ENCODE measurements at regions of chr3 and their contacts with region 1.

Region 1: GRCh38 chr3:93906245-93906644 is 67.5 kb downstream of the PROS1 start:
- DNase-seq: no peak
- ATAC-seq: no peak
- H3K4me3 ChIP-seq: no peak overlapping the region
- H3K27ac ChIP-seq: no peak overlapping the region
- H3K4me1 ChIP-seq: no peaks in the 10 kb centered on the region
- H3K27me3 ChIP-seq: no peaks in the 10 kb centered on the region
- CTCF ChIP-seq: no peak
- POLR2A ChIP-seq: no peak
- RAD21 ChIP-seq: no peak

Region 2: GRCh38 chr3:93855406-93855805 is 50.8 kb before region 1 on chr3:
- CTCF ChIA-PET with region 1: no interaction called
- POLR2A ChIA-PET with region 1: interaction called, 10 read pairs
- dilution Hi-C with region 1: no loop called
- in situ Hi-C with region 1: no loop called
- intact Hi-C with region 1: no loop called
- DNase-seq: no peak
- ATAC-seq: no peak
- H3K4me3 ChIP-seq: no peak overlapping the region
- H3K27ac ChIP-seq: no peak overlapping the region
- H3K4me1 ChIP-seq: no peaks in the 10 kb centered on the region
- H3K27me3 ChIP-seq: no peaks in the 10 kb centered on the region
- CTCF ChIP-seq: no peak
- POLR2A ChIP-seq: no peak
- RAD21 ChIP-seq: no peak

Region 3: GRCh38 chr3:93961489-93961888 is 55.2 kb after region 1 on chr3:
- CTCF ChIA-PET with region 1: no interaction called
- POLR2A ChIA-PET with region 1: no interaction called
- dilution Hi-C with region 1: no loop called
- in situ Hi-C with region 1: no loop called
- intact Hi-C with region 1: loop called (anchors 5 kb)
- DNase-seq: no peak
- ATAC-seq: no peak
- H3K4me3 ChIP-seq: no peak overlapping the region
- H3K27ac ChIP-seq: no peak overlapping the region
- H3K4me1 ChIP-seq: no peaks in the 10 kb centered on the region
- H3K27me3 ChIP-seq: no peaks in the 10 kb centered on the region
- CTCF ChIP-seq: no peak
- POLR2A ChIP-seq: no peak
- RAD21 ChIP-seq: no peak

Region 4: DNA sequence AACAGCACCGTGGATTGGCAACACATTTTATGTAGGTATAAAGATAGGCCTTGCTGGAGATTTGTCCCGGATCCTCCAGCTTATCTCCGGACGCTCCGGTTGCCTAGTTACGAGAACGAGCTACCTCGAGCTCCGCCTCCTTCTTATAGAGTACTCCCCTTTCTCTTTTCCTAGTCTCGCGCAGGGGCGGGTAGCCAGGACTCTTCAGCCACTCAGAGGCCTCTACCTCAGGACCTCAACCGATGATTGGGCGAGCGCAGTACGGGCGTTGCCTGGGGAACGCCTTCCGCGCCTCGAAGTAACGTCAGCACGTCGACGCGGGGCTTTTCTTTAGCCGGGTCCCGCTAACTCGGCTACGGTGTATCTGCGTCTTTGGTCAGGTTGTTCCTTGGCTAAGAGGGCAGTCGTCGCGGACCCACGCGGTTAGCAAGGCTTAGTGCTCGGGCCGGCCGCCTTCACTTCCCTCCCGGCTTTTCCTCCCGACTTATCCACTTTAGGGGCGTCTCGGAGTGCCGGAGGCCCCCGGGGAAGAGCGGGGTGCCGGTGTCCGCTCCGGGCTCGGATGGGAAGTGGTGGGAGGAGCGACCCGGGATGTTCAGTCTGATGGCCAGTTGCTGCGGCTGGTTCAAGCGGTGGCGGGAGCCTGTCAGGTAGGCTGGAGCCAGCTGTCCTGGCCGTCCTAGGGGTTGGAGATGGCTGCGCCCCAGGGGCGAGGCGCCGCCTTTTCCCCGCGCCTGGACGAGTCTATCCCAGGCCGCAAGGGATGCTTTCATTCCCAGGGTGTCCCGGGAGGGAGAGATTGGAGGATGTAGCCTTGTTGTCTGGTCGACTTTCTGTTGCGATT is 73.8 kb after region 1 on chr3 and contains the start of gene ARL13B:
- CTCF ChIA-PET with region 1: no interaction called
- POLR2A ChIA-PET with region 1: no interaction called
- dilution Hi-C with region 1: no loop called
- in situ Hi-C with region 1: no loop called
- intact Hi-C with region 1: no loop called
- DNase-seq: peak; percentile 98
- ATAC-seq: peak; percentile 100
- H3K4me3 ChIP-seq: peak within 1 kb of the TSS; percentile 68
- H3K27ac ChIP-seq: peak within 1 kb of the TSS; percentile 50; the same call in 1 of the 2 replicates
- H3K4me1 ChIP-seq: no peaks in the 10 kb centered on the region; the same call in 1 of the 2 replicates
- H3K27me3 ChIP-seq: no peaks in the 10 kb centered on the region
- CTCF ChIP-seq: no peak
- POLR2A ChIP-seq: peak; percentile 80
- RAD21 ChIP-seq: no peak
- total RNA-seq, gene ARL13B: 2.7 and 6.7 TPM in 2 replicates

Region 5: GRCh38 chr3:94146455-94146854 is 240.2 kb after region 1 on chr3:
- CTCF ChIA-PET with region 1: no interaction called
- POLR2A ChIA-PET with region 1: no interaction called
- dilution Hi-C with region 1: no loop called
- in situ Hi-C with region 1: no loop called
- intact Hi-C with region 1: no loop called
- DNase-seq: no peak
- ATAC-seq: no peak
- H3K4me3 ChIP-seq: no peak overlapping the region
- H3K27ac ChIP-seq: no peak overlapping the region
- H3K4me1 ChIP-seq: no peaks in the 10 kb centered on the region
- H3K27me3 ChIP-seq: no peaks in the 10 kb centered on the region
- CTCF ChIP-seq: no peak
- POLR2A ChIP-seq: no peak
- RAD21 ChIP-seq: no peak